Activated CD4-positive, alpha-beta T cell treated with anti-CD3 and anti-CD28 coated beads, Interleukin-2, amount 10 ng/mL, durations not matched to agents 7 days and 5 days (primary cell): ENCODE measurements at regions of chr19 and their contacts with region 1.

Region 1: GRCh38 chr19:51158474-51159129 is 16.5 kb downstream of the SIGLEC7 start:
- DNase-seq: peak; percentile 85
- H3K4me3 Mint-ChIP-seq: no peak overlapping the region
- H3K27ac Mint-ChIP-seq: no peak overlapping the region
- H3K4me1 Mint-ChIP-seq: peaks cover 26% of the 10 kb centered on the region
- H3K27me3 Mint-ChIP-seq: peaks cover 13% of the 10 kb centered on the region

Region 2: DNA sequence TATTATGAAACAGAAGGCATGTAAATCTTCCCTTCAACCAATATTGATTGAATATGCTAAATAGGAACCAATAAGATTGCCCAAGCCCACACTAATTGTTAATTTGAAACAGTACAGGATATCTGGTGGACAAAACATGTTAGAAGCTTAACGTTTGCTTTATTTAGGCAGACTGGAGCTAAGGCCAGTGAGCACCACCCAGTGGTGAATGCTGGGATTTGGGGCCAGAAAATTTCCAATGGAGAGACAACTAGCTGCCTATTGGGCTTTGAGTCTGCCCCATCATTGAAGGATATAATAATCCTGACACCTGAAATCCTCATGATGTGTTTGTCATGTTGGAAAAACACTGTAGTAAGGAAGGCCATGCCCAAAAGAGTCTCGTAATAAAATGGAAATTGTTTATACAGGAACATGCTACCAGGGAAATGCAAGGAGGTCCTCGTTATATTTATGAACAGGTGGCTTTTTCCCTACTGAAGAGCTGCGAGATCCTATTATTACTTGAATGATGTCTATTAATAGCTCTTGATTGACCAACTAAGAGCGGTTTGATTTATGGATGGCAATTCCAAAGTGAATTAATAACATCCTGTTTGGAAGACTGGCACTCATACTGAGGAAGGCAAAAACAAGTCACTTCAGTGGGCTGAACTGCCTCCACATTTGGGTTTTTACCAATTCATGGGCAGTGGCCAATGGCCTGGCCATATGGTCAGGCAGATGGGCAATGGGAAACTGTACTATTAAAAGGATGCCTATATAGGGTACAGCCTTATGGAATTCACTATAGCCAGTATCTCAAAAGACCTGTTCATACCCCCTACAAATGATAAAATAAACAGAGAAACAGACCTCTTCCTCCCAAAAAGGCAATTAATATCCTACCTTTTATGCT is 101.0 kb after region 1 on chr19:
- CTCF ChIA-PET with region 1: interaction called, 13 read pairs
- POLR2A ChIA-PET with region 1: no interaction called
- DNase-seq: peak; percentile 64
- H3K4me3 Mint-ChIP-seq: no peak overlapping the region
- H3K27ac Mint-ChIP-seq: no peak overlapping the region
- H3K4me1 Mint-ChIP-seq: peaks cover 38% of the 10 kb centered on the region
- H3K27me3 Mint-ChIP-seq: peaks cover 21% of the 10 kb centered on the region

Region 3: DNA sequence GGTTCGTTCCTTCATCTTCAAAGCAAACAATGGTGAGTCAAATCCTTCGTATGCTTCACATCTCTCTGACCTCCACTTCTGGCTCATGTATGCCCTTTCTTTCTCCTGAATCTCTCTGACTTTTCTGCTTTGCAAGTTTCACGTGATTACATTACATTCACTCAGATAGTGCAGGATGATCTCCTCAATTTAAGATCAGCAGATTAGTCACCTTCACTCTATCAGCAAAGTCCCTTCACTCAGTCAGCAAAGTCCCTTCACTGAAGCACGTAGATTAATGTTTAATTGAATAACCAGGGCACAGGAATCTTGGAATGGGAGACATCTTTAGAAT is 115.4 kb after region 1 on chr19:
- CTCF ChIA-PET with region 1: no interaction called
- POLR2A ChIA-PET with region 1: no interaction called
- DNase-seq: no peak
- H3K4me3 Mint-ChIP-seq: no peak overlapping the region
- H3K27ac Mint-ChIP-seq: peak overlapping the region; percentile 4
- H3K4me1 Mint-ChIP-seq: peaks cover 26% of the 10 kb centered on the region
- H3K27me3 Mint-ChIP-seq: peaks cover 13% of the 10 kb centered on the region